Ovary (tissue), 10 donors: ENCODE measurements at regions of chr9 and their contacts with region 1.

Region 1: GRCh38 chr9:90870621-90871326 is 69.2 kb downstream of the SYK start:
- DNase-seq: peak in 1 of 5 donors; percentile 34
- H3K4me3 ChIP-seq: no peak overlapping the region
- H3K27ac ChIP-seq: no peak overlapping the region
- H3K4me1 ChIP-seq: no peaks in the 10 kb centered on the region
- H3K27me3 ChIP-seq: no peaks in the 10 kb centered on the region
- CTCF ChIP-seq: peak; percentile 51 to 68 (median 65)
- EP300 ChIP-seq: no peak
- POLR2A ChIP-seq: no peak

Region 2: GRCh38 chr9:89597711-89598625 is 1272.8 kb before region 1 on chr9:
- intact Hi-C with region 1: loop called in 3 of 4 experiments (anchors 5 to 10 kb)
- DNase-seq: peak; percentile 36 to 67 (median 59)
- H3K4me3 ChIP-seq: no peak overlapping the region
- H3K27ac ChIP-seq: no peak overlapping the region
- H3K4me1 ChIP-seq: no peaks in the 10 kb centered on the region
- H3K27me3 ChIP-seq: no peaks in the 10 kb centered on the region
- CTCF ChIP-seq: peak; percentile 46 to 79 (median 76)
- EP300 ChIP-seq: no peak
- POLR2A ChIP-seq: no peak

Region 3: GRCh38 chr9:90722071-90722470 is 148.7 kb before region 1 on chr9:
- intact Hi-C with region 1: no loop called
- DNase-seq: no peak
- H3K4me3 ChIP-seq: no peak overlapping the region
- H3K27ac ChIP-seq: no peak overlapping the region
- H3K4me1 ChIP-seq: no peaks in the 10 kb centered on the region
- H3K27me3 ChIP-seq: no peaks in the 10 kb centered on the region
- CTCF ChIP-seq: no peak
- EP300 ChIP-seq: no peak
- POLR2A ChIP-seq: no peak

Region 4: GRCh38 chr9:92686954-92687353 is 1816.2 kb after region 1 on chr9:
- intact Hi-C with region 1: loop called in 1 of 4 experiments (anchors 5 kb)
- DNase-seq: no peak
- H3K4me3 ChIP-seq: no peak overlapping the region
- H3K27ac ChIP-seq: no peak overlapping the region
- H3K4me1 ChIP-seq: no peaks in the 10 kb centered on the region
- H3K27me3 ChIP-seq: no peaks in the 10 kb centered on the region
- CTCF ChIP-seq: no peak
- EP300 ChIP-seq: no peak
- POLR2A ChIP-seq: no peak